Heart right ventricle (tissue), 16 donors: ENCODE measurements at regions of chr3 and their contacts with region 1.

Region 1: DNA sequence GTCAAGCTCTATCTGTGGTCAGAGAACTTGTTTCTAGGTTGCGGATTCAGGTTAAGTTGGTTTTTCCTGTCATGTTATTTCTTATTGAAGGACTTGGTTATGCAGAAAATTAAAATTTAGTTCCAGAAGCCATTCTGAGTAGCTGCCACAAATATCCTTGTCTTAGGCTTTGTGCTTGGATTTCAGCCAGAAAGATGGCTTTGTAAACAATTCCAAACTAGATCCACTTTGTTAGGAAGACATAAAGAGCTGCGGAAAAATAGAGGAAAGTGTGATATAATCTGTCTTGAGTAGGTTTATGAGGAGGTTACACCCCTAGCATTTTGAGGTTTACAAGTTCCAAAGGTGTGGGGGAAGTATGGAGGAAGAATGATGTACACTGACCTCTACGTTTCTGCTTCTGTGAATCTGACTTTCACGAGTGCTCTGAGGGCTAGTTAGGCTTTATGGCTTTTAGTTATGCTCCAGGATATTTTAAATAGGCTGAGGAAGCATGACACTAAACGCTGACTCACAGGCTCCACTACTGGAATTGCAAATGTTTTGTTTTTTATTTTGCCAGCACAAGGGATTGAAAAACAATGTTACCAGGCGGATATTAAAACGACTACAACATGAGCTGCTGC is 46.3 kb upstream of the UTS2B start:
- DNase-seq: no peak
- ATAC-seq: peak in 7 of 8 donors; percentile 56 to 78 (median 65)
- H3K4me3 ChIP-seq: no peak overlapping the region
- H3K27ac ChIP-seq: peak overlapping the region in 8 of 10 donors; percentile 11 to 65 (median 36)
- H3K4me1 ChIP-seq: peaks cover 3 to 55% (median 43%) of the 10 kb centered on the region in 9 donors
- H3K27me3 ChIP-seq: no peaks in the 10 kb centered on the region
- CTCF ChIP-seq: no peak

Region 2: DNA sequence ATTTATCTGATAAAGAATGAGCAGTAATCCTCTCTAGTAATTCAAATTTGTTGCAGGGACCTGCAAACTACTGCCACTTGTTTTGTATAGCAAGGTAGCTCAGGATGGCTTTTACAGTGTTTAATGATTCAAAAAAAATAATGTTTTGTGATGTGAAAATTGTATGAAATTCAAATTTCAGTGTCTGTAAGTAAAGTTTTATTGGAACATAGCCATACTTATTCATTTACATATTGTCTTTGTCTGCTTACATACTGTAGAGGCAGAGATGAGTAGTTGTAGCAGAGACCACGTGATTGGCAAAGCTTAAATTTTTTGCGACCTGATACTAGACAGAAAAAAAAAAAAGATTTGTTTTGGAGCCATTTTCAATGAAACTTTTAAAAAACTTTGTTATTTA is 39.8 kb before region 1 on chr3:
- intact Hi-C with region 1: loop called in 4 of 10 experiments (anchors 5 to 10 kb)
- DNase-seq: no peak
- ATAC-seq: no peak
- H3K4me3 ChIP-seq: no peak overlapping the region
- H3K27ac ChIP-seq: no peak overlapping the region
- H3K4me1 ChIP-seq: peaks cover 7 to 98% (median 86%) of the 10 kb centered on the region in 9 donors
- H3K27me3 ChIP-seq: no peaks in the 10 kb centered on the region
- CTCF ChIP-seq: no peak

Region 3: DNA sequence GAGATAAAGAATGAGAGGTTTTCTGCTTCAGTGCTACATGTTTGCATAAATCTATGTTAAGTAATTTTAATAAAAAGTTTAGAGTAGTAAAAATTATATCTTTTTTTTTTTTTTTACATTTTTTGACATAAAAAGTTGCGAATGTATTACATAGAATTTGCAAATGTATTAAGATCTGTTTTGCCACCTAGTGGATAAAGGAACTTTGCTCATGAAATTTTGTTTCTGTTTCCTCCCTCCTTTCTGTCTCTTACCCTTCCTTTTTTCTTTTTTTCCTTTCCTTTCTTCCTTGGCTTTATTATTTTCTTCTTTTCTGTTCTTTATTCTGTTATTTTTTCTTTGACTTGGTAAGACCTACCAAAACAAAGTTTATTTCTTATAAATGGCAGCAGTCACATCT is 12.2 kb after region 1 on chr3:
- intact Hi-C with region 1: no loop called
- DNase-seq: no peak
- ATAC-seq: no peak
- H3K4me3 ChIP-seq: no peak overlapping the region
- H3K27ac ChIP-seq: no peak overlapping the region
- H3K4me1 ChIP-seq: peaks cover 0 to 9% (median 0%) of the 10 kb centered on the region in 9 donors
- H3K27me3 ChIP-seq: no peaks in the 10 kb centered on the region
- CTCF ChIP-seq: peak in 7 of 9 donors; percentile 21 to 53 (median 41)

Region 4: DNA sequence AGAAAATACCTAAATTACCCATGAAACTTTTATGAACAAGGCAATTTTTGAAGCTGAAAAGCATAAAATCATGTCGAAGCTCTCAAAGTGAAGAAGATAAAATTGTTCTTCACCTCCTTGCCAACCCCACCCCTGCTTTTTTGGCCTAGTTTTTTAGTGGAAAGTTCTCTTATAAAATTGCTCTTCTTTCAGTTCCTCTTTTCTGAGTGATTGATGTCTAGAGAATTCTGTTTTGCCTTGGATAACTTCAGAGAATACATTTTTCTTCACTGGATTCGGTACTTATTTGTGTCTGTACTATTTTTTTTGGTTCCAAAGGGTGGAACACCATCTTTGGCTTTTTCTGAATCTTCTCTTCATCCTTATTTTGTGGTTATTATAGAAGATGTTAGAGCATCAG is 59.4 kb after region 1 on chr3:
- intact Hi-C with region 1: no loop called
- DNase-seq: no peak
- ATAC-seq: no peak
- H3K4me3 ChIP-seq: no peak overlapping the region
- H3K27ac ChIP-seq: no peak overlapping the region
- H3K4me1 ChIP-seq: no peaks in the 10 kb centered on the region
- H3K27me3 ChIP-seq: no peaks in the 10 kb centered on the region
- CTCF ChIP-seq: no peak